Activated T-helper 2 cell treated with anti-CD3 and anti-CD28 coated beads, Interferon-gamma antibody, Interleukin-2, Interleukin-4, amounts not matched to agents 10 μg/mL and 5 μg/mL and 100 μg/mL, durations not matched to agents 14 hours and 24 hours and 36 hours (primary cell): ENCODE measurements at regions of chr6 and their contacts with region 1.

Region 1: DNA sequence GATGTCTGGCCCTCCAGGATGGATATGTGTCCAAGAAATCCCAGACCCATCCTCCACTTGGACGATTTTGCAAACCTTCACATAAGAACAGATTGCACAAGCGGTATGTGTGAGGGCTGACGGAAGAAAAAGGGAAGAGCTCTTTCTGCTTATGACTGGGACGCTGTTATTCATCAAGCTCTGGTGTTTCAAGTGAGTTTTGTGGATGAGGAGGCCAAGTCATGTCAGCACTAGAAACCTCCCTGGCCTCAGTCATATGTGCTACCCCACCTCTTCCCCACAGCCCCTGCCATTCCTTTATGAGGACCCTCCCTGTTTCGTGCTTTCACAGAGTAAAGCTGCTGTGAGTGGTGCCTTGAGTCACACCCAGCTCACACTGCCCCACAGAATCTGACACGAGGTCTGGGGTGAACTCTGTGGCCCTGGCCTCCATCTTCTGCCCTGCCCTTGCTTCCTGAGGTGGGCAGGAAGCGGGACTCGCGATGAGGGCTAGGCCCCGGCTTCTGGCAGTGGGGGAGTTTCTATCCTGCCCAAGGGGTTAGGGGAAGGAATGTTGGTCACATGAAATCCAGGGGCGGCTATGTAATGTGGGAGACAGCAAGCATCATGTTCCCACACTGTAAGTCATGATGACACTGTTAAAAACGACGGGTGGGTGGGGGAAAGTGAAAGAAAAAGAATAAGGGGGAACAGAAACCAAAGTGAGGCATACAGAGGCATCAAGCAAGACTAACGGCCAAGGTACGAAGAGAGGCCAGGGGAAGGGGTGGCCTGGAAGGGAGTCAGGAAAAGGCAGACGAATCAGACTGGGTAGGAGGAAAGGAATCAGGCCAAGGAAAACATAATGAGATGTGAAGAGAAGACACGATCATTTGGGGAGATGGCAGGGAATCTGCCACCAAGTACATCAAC is 78.1 kb downstream of the PRDM1 start:
- DNase-seq: peak; percentile 57
- H3K4me3 Mint-ChIP-seq: peak overlapping the region; percentile 74
- H3K27ac Mint-ChIP-seq: peak overlapping the region; percentile 93
- H3K4me1 Mint-ChIP-seq: peaks cover 56% of the 10 kb centered on the region
- H3K27me3 Mint-ChIP-seq: no peaks in the 10 kb centered on the region

Region 2: DNA sequence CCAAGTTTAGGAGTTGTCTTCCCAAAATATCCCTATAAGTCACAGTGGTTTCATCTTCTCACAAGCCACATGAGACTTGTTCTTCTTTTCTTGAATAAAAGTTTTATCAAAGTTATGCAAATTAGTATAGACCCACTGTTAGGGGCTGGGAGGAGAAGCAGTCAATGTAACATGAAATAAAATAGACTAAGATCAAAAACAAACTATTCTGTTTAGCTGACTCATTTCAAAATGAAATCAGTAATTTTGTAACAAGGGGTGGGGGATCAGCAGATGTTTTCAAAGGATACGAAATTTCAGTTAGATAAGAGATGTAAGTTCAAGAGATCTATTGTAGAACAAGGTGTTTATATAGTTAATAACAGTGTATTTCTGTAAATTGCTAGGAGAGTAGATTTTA is 417.7 kb before region 1 on chr6:
- intact Hi-C with region 1: loop called (anchors 1 kb)
- DNase-seq: no peak
- H3K4me3 Mint-ChIP-seq: no peak overlapping the region
- H3K27ac Mint-ChIP-seq: peak overlapping the region; percentile 47
- H3K4me1 Mint-ChIP-seq: peaks cover 59% of the 10 kb centered on the region
- H3K27me3 Mint-ChIP-seq: no peaks in the 10 kb centered on the region

Region 3: GRCh38 chr6:106063448-106063850 is 100.8 kb before region 1 on chr6:
- intact Hi-C with region 1: no loop called
- DNase-seq: no peak
- H3K4me3 Mint-ChIP-seq: no peak overlapping the region
- H3K27ac Mint-ChIP-seq: no peak overlapping the region
- H3K4me1 Mint-ChIP-seq: peaks cover 5% of the 10 kb centered on the region
- H3K27me3 Mint-ChIP-seq: peaks cover 5% of the 10 kb centered on the region

Region 4: GRCh38 chr6:106114492-106115265 is 49.5 kb before region 1 on chr6:
- intact Hi-C with region 1: loop called (anchors 1 kb)
- DNase-seq: peak; percentile 55
- H3K4me3 Mint-ChIP-seq: peak overlapping the region; percentile 31
- H3K27ac Mint-ChIP-seq: peak overlapping the region; percentile 78
- H3K4me1 Mint-ChIP-seq: peaks cover 89% of the 10 kb centered on the region
- H3K27me3 Mint-ChIP-seq: no peaks in the 10 kb centered on the region

Region 5: DNA sequence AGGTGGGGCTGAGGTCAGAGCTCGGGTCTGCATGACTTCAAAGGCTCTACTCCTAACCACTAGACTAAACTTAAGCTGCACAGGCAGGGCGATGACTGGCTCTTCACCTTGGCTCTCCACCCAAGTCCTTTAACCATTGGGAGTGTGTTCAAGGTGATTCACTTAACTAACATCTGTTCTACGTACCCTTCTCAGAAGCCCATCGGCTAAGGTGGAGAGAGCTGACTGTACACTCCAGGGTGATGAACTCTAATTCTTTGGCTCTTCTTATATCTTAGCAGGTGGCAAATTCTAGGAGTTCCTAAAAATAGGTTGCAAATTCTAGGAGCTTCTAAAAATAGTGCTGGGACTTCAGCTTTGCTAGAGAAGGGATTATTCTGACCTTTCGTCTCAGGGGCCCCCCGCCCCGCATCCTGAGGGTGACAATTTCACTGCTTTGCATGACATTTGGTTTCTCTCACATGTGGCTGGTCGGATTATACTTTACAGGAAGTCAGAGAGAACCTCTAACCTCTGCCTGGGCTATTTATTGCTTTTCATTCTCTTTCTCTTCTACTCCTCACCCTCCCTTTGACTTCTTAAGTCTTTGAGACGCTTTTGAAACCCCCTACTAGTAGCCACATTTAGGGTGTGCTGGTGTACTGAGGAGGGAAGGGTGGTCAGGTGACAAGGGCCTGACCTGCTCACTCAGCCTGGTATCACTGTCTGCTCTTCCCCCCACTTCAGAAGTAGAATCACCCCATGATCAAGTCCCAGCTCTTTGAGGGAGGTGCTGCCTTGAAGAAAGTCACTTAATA is 22.6 kb before region 1 on chr6:
- intact Hi-C with region 1: loop called (anchors 1 kb)
- DNase-seq: peak; percentile 35
- H3K4me3 Mint-ChIP-seq: peak overlapping the region; percentile 55
- H3K27ac Mint-ChIP-seq: peak overlapping the region; percentile 98
- H3K4me1 Mint-ChIP-seq: peaks cover 63% of the 10 kb centered on the region
- H3K27me3 Mint-ChIP-seq: no peaks in the 10 kb centered on the region

Region 6: GRCh38 chr6:106187424-106187982 is 23.3 kb after region 1 on chr6:
- intact Hi-C with region 1: loop called (anchors 1 kb)
- DNase-seq: no peak
- H3K4me3 Mint-ChIP-seq: peak overlapping the region; percentile 48
- H3K27ac Mint-ChIP-seq: peak overlapping the region; percentile 86
- H3K4me1 Mint-ChIP-seq: peaks cover 68% of the 10 kb centered on the region
- H3K27me3 Mint-ChIP-seq: no peaks in the 10 kb centered on the region

Region 7: DNA sequence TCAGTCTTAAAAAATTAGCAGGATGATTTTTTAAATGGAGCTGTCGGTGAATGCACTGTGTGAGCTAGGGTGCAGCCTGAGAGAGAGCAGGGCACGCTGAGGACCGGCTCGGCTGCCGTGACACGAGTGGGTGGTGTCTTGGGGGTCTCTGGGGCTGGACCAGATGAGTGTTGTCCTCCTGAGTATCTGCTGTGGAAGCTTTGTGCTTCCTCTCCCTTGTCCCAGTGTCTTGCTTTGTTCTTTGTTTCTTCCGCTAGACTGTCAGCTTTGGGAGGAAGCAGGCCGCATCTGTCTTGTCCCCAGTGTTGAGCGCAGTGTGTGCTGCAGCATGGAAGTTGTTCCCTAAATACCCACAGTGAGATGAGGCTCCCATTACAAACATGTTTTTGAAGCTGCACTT is 375.7 kb after region 1 on chr6:
- intact Hi-C with region 1: no loop called
- DNase-seq: no peak
- H3K4me3 Mint-ChIP-seq: no peak overlapping the region
- H3K27ac Mint-ChIP-seq: peak overlapping the region; percentile 21
- H3K4me1 Mint-ChIP-seq: peaks cover 34% of the 10 kb centered on the region
- H3K27me3 Mint-ChIP-seq: no peaks in the 10 kb centered on the region